MCF 10A (cell line): ENCODE measurements at regions of chrX and their contacts with region 1.

Region 1: GRCh38 chrX:19887911-19888879 is 795 bp upstream of the SH3KBP1 start:
- DNase-seq: peak; percentile 87
- H3K4me3 Mint-ChIP-seq: peak overlapping the region; percentile 78
- H3K27ac Mint-ChIP-seq: peak overlapping the region; percentile 83
- H3K4me1 Mint-ChIP-seq: peaks cover 11% of the 10 kb centered on the region
- H3K27me3 Mint-ChIP-seq: peaks cover 15% of the 10 kb centered on the region
- CTCF ChIP-seq: peak; percentile 49

Region 2: DNA sequence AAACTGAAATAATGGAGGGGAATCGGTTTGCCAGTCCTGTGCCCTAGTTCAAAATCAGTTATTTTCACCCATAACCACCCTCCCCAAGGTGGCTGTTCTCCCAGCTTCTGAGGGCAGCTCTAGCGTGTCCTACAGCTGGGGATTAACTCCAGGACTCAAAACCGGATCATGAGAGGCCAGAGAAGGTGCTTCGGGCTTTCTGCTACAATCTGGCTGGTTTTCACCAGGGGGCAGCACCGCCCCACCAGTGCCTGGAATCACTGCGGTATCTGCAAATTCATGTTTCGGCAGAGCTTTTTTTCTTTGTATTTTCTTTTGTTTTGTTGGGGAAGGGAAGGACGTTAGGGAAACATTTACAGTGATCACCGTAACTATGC is 516.0 kb before region 1 on chrX:
- CTCF ChIA-PET with region 1: interaction called, 4 read pairs
- POLR2A ChIA-PET with region 1: no interaction called
- intact Hi-C with region 1: loop called (anchors 2 kb)
- DNase-seq: peak; percentile 63
- H3K4me3 Mint-ChIP-seq: peak overlapping the region; percentile 79
- H3K27ac Mint-ChIP-seq: peak overlapping the region; percentile 35
- H3K4me1 Mint-ChIP-seq: no peaks in the 10 kb centered on the region
- H3K27me3 Mint-ChIP-seq: no peaks in the 10 kb centered on the region
- CTCF ChIP-seq: peak; percentile 59

Region 3: DNA sequence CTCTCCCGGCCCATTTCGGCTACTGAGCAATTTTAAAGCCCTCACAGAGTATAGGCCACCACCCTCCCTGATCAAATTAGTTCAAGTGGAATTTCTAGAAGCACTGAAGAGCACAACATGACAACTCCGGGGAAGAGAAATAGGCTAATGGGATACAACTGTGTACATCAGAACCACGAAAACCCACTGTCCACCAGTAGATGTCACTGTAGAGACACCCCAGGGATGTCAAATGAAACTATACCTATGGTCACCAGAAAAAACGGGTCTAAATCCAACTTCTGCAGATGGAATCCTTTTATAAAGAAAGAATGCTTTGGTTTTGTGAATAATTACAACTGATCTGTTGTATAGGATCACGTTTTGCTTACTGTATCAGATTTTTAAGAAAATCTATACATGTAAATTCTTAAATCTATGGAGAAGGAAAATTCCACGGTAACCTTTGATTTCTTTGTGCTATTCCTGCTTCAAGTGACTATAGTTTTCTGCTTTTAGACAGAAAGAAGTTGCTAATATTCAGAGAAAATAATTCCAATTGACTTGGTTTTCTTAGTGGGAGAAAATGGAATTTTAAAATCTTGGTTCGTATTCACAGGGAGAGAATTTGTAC is 343.4 kb before region 1 on chrX:
- CTCF ChIA-PET with region 1: no interaction called
- POLR2A ChIA-PET with region 1: no interaction called
- intact Hi-C with region 1: loop called (anchors 1 kb)
- DNase-seq: peak; percentile 71
- H3K4me3 Mint-ChIP-seq: no peak overlapping the region
- H3K27ac Mint-ChIP-seq: no peak overlapping the region
- H3K4me1 Mint-ChIP-seq: no peaks in the 10 kb centered on the region
- H3K27me3 Mint-ChIP-seq: peaks cover 66% of the 10 kb centered on the region
- CTCF ChIP-seq: peak; percentile 79

Region 4: GRCh38 chrX:19593690-19594089 is 294.5 kb before region 1 on chrX:
- CTCF ChIA-PET with region 1: interaction called, 4 read pairs
- POLR2A ChIA-PET with region 1: interaction called, 4 read pairs
- intact Hi-C with region 1: loop called (anchors 1 kb)
- DNase-seq: peak; percentile 64
- H3K4me3 Mint-ChIP-seq: no peak overlapping the region
- H3K27ac Mint-ChIP-seq: no peak overlapping the region
- H3K4me1 Mint-ChIP-seq: no peaks in the 10 kb centered on the region
- H3K27me3 Mint-ChIP-seq: peaks cover 31% of the 10 kb centered on the region
- CTCF ChIP-seq: peak; percentile 57

Region 5: GRCh38 chrX:19673375-19674040 is 214.7 kb before region 1 on chrX:
- CTCF ChIA-PET with region 1: no interaction called
- POLR2A ChIA-PET with region 1: interaction called, 3 read pairs
- intact Hi-C with region 1: loop called (anchors 5 kb)
- DNase-seq: peak; percentile 98
- H3K4me3 Mint-ChIP-seq: no peak overlapping the region
- H3K27ac Mint-ChIP-seq: no peak overlapping the region
- H3K4me1 Mint-ChIP-seq: peaks cover 31% of the 10 kb centered on the region
- H3K27me3 Mint-ChIP-seq: no peaks in the 10 kb centered on the region
- CTCF ChIP-seq: no peak

Region 6: DNA sequence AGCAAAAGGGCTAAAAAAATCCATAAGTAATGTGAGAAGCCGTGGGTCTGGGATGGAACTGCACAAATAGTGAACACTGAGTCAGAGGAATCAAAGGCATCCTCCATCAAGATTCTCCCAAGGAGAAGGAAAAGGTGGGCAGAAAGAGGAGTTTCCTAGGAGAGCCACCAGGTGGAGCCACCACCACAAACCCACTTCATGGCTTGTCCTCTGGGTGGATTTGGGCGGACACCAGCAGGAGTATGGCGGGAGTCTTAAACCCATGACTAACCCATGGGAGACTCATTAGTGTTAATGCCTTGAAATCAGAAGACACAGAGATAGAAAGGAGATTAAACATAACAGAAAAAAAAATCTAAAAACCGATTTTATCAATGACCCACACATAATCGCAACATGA is 148.5 kb before region 1 on chrX:
- CTCF ChIA-PET with region 1: interaction called, 5 read pairs
- POLR2A ChIA-PET with region 1: no interaction called
- intact Hi-C with region 1: loop called (anchors 1 kb)
- DNase-seq: peak; percentile 82
- H3K4me3 Mint-ChIP-seq: no peak overlapping the region
- H3K27ac Mint-ChIP-seq: no peak overlapping the region
- H3K4me1 Mint-ChIP-seq: no peaks in the 10 kb centered on the region
- H3K27me3 Mint-ChIP-seq: peaks cover 65% of the 10 kb centered on the region
- CTCF ChIP-seq: peak; percentile 52

Region 7: GRCh38 chrX:20487227-20487626 is 599.0 kb after region 1 on chrX:
- CTCF ChIA-PET with region 1: no interaction called
- POLR2A ChIA-PET with region 1: no interaction called
- intact Hi-C with region 1: no loop called
- DNase-seq: peak; percentile 27
- H3K4me3 Mint-ChIP-seq: no peak overlapping the region
- H3K27ac Mint-ChIP-seq: no peak overlapping the region
- H3K4me1 Mint-ChIP-seq: no peaks in the 10 kb centered on the region
- H3K27me3 Mint-ChIP-seq: peaks cover 29% of the 10 kb centered on the region
- CTCF ChIP-seq: no peak